ENCODE measurements at regions of chr1 and their contacts with region 1.

Region 1: GRCh38 chr1:174217787-174218574 is 58.7 kb downstream of the RABGAP1L start:
- DNase-seq: no peak
- H3K4me3 ChIP-seq: no peak overlapping the region
- H3K27ac ChIP-seq: no peak overlapping the region
- H3K4me1 ChIP-seq: no peaks in the 10 kb centered on the region
- H3K27me3 ChIP-seq: no peaks in the 10 kb centered on the region
- CTCF ChIP-seq: peak; percentile 62

Region 2: DNA sequence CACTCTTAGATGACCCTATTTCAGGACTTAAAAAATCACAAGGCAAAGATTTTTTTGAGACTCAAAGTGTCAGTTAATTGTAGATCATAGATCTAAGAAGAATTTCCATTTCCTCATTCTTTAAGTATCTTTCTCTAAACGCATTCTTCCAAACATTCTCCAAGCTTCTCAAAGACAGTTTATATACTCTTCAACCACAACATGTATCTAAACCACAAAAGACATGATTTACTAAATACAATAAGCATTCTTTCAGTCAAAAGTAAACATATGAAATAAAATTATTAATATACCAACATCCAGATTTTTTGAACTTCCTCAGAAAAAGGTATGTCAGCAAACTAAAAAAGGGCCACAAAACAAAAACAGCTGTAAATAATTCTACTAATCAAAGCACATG is 220.2 kb before region 1 on chr1:
- intact Hi-C with region 1: loop called (anchors 10 kb)
- DNase-seq: no peak
- H3K4me3 ChIP-seq: no peak overlapping the region
- H3K27ac ChIP-seq: no peak overlapping the region
- H3K4me1 ChIP-seq: no peaks in the 10 kb centered on the region
- H3K27me3 ChIP-seq: no peaks in the 10 kb centered on the region
- CTCF ChIP-seq: no peak

Region 3: GRCh38 chr1:174097426-174097825 is 120.6 kb before region 1 on chr1:
- intact Hi-C with region 1: loop called (anchors 10 kb)
- DNase-seq: no peak
- H3K4me3 ChIP-seq: no peak overlapping the region
- H3K27ac ChIP-seq: no peak overlapping the region
- H3K4me1 ChIP-seq: no peaks in the 10 kb centered on the region
- H3K27me3 ChIP-seq: no peaks in the 10 kb centered on the region
- CTCF ChIP-seq: no peak

Region 4: GRCh38 chr1:174258148-174258550 is 40.2 kb after region 1 on chr1:
- intact Hi-C with region 1: no loop called
- DNase-seq: peak; percentile 48
- H3K4me3 ChIP-seq: no peak overlapping the region
- H3K27ac ChIP-seq: no peak overlapping the region
- H3K4me1 ChIP-seq: no peaks in the 10 kb centered on the region
- H3K27me3 ChIP-seq: no peaks in the 10 kb centered on the region
- CTCF ChIP-seq: peak; percentile 39